PC-9 (cell line): ENCODE measurements at regions of chr15 and their contacts with region 1.

Region 1: GRCh38 chr15:69058830-69059556 is 44.5 kb downstream of the NOX5 start:
- DNase-seq: peak; percentile 71 to 77
- H3K4me3 ChIP-seq: no peak overlapping the region
- H3K27ac ChIP-seq: no peak overlapping the region
- H3K4me1 ChIP-seq: peaks cover 3% of the 10 kb centered on the region
- H3K27me3 ChIP-seq: no peaks in the 10 kb centered on the region
- CTCF ChIP-seq: peak; percentile 86

Region 2: DNA sequence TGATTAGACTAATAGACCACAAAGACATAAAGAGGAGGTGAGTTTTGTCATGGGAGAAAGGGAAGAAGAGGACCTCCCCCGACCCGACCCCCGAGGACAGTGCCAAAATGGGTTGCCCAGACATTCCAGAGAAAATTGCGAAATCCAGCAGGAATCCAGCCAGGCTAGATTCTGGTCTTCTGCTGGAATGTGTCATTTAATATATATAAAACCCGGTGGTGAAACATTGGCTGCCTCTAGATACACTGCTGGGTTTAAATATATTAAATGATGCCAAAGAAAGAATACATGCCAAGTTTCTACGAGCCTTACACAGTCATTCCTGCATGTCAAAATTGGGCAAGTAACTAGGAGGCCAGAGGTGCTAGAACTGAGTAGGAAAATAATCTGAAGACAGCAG is 173.9 kb before region 1 on chr15:
- CTCF ChIA-PET with region 1: no interaction called
- POLR2A ChIA-PET with region 1: no interaction called
- intact Hi-C with region 1: loop called (anchors 10 kb)
- DNase-seq: peak; percentile 73 to 84
- H3K4me3 ChIP-seq: no peak overlapping the region; the same call in 1 of the 2 replicates
- H3K27ac ChIP-seq: peak overlapping the region; percentile 44
- H3K4me1 ChIP-seq: peaks cover 25% of the 10 kb centered on the region
- H3K27me3 ChIP-seq: no peaks in the 10 kb centered on the region
- CTCF ChIP-seq: no peak

Region 3: DNA sequence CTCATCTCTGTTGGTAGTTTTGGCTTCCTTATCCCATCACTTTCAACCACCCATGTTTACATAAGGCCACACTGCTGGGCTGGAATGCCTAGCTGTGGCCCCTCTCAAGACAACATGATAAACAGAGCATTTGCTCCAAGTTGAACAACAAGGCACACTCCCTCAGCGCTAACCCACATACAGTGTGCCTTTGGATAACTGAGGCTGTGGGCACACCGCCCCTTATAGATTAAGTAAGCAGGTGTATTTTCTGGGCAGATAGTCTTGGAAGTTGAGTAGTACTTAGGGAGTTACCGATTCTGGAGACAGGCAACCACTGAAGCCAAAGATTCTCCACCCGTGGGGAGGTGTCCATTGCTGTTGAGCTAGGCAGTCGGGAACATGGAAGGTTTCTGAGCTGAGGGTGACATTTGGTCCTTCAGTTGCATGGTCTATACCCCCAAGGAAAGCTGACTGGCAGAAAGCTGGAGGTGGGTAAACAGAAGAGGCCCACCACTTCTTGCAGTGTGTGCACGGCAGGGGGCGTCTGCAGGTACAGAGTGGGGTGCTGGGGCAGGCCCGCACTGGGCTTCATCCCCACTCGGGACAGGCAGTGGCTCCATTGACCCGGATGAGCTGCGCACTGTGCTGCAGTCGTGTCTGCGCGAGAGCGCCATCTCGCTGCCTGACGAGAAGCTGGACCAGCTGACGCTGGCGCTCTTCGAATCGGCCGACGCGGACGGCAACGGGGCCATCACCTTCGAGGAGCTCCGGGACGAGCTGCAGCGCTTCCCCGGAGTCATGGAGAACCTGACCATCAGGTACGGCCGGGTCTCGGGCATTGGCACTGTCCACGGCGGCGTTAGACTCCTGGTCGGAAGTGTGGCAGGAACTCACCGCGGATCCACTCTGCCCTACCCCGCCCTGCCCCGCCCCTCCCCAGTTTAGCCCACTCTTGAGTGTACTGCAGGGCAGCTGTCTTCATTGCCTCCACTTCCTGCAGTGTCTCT is 27.7 kb before region 1 on chr15:
- CTCF ChIA-PET with region 1: interaction called, 13 read pairs
- POLR2A ChIA-PET with region 1: no interaction called
- intact Hi-C with region 1: no loop called
- DNase-seq: peak in 1 of 2 experiments; percentile 68
- H3K4me3 ChIP-seq: peak overlapping the region; percentile 2; the same call in 1 of the 2 replicates
- H3K27ac ChIP-seq: peak overlapping the region; percentile 36; the same call in 1 of the 2 replicates
- H3K4me1 ChIP-seq: peaks cover 26% of the 10 kb centered on the region
- H3K27me3 ChIP-seq: no peaks in the 10 kb centered on the region
- CTCF ChIP-seq: peak; percentile 44; the same call in 1 of the 2 replicates

Region 4: GRCh38 chr15:69114331-69114928 is 55.4 kb after region 1 on chr15:
- CTCF ChIA-PET with region 1: no interaction called
- POLR2A ChIA-PET with region 1: no interaction called
- intact Hi-C with region 1: no loop called
- DNase-seq: peak in 1 of 2 experiments; percentile 62
- H3K4me3 ChIP-seq: no peak overlapping the region
- H3K27ac ChIP-seq: no peak overlapping the region
- H3K4me1 ChIP-seq: peaks cover 19% of the 10 kb centered on the region; the same call in 1 of the 2 replicates
- H3K27me3 ChIP-seq: no peaks in the 10 kb centered on the region
- CTCF ChIP-seq: no peak

Region 5: DNA sequence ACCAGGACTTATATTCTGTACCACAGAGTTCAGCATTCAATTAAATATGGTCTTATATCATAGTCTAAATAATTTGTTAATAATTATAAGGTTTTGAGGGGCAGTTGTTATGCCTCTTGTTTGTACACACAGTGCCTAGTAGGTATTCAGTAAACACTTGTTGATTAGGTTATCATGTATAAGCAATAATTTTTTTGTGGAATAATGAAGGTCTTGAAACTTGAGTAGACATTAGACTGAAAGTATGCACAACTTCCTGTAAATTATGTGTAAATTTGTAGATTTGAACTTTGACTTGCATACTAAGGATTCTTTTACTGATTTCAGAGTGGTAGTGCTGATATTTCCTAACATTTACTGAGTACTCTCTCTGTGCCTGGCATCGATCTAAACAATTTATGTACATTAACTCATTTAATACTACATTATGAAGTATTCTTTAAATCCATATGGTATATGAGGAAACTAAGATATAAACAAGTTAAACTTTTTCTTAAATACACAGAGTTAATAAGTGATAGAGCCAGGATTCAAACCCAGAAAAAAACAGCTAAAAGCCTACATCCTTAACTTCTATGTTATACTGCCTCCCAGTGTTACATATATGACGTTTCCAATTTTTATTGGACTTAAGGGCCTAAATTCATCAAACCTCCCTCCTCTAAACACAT is 166.5 kb after region 1 on chr15:
- CTCF ChIA-PET with region 1: no interaction called
- POLR2A ChIA-PET with region 1: no interaction called
- intact Hi-C with region 1: loop called (anchors 1 kb)
- DNase-seq: peak in 1 of 2 experiments; percentile 35
- H3K4me3 ChIP-seq: no peak overlapping the region
- H3K27ac ChIP-seq: no peak overlapping the region
- H3K4me1 ChIP-seq: peaks cover 16% of the 10 kb centered on the region
- H3K27me3 ChIP-seq: no peaks in the 10 kb centered on the region
- CTCF ChIP-seq: peak; percentile 49; the same call in 1 of the 2 replicates

Region 6: DNA sequence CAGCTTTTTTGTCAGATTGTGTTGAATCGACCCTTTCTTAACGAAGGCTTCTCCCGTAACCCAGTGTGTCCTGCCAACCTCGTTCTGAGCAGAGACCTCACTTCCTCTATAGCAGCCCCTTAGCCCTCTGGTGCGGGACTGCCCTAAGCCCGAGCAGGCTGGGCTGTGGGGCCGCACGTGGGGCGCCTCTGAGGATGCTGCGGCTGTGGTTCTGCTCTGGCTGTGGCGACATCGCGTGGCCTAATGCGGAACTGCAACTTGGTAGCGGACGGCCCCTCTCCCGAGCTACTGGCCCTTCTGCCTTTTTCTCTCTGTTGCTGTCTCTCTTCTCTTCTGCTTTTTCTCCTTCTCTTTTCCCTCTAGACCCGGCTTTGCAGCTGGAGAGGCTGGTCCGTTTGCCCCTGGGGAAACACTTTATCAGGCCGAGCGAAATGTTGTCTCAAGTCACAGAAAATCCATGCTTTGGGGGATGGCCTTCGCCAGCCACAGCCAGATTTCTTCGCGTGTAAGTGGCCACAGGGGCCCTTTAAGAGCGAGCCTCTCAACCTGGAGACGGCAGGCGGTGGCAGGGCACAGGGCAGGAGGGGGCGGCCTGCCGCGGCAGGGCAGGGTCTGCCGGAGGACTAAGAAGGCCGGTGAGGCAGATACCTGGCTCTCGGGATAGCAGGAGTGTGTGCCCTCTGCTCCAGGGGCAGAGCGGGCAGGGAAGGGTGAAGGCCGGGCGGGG is 335.7 kb after region 1 on chr15:
- CTCF ChIA-PET with region 1: no interaction called
- POLR2A ChIA-PET with region 1: no interaction called
- intact Hi-C with region 1: loop called (anchors 1 kb)
- DNase-seq: peak in 1 of 2 experiments; percentile 77
- H3K4me3 ChIP-seq: no peak overlapping the region
- H3K27ac ChIP-seq: no peak overlapping the region
- H3K4me1 ChIP-seq: peaks cover 34% of the 10 kb centered on the region
- H3K27me3 ChIP-seq: no peaks in the 10 kb centered on the region
- CTCF ChIP-seq: peak; percentile 92